Mammary epithelial cell (primary cell): ENCODE measurements at regions of chr20 and their contacts with region 1.

Region 1: GRCh38 chr20:17938871-17939619 is 29.5 kb downstream of the SNX5 start:
- DNase-seq: peak; percentile 29
- H3K4me3 ChIP-seq: no peak overlapping the region
- H3K27ac ChIP-seq: no peak overlapping the region
- H3K4me1 ChIP-seq: no peaks in the 10 kb centered on the region
- H3K27me3 ChIP-seq: no peaks in the 10 kb centered on the region
- CTCF ChIP-seq: peak; percentile 82 to 83

Region 2: GRCh38 chr20:17611540-17612286 is 327.3 kb before region 1 on chr20:
- CTCF ChIA-PET with region 1: no interaction called
- dilution Hi-C with region 1: no loop called
- in situ Hi-C with region 1: no loop called
- intact Hi-C with region 1: loop called (anchors 1 kb)
- DNase-seq: peak; percentile 70
- H3K4me3 ChIP-seq: no peak overlapping the region
- H3K27ac ChIP-seq: no peak overlapping the region
- H3K4me1 ChIP-seq: peaks cover 29% of the 10 kb centered on the region
- H3K27me3 ChIP-seq: no peaks in the 10 kb centered on the region
- CTCF ChIP-seq: peak in 1 of 2 donors; percentile 75

Region 3: GRCh38 chr20:18032977-18033892 is 94.2 kb after region 1 on chr20:
- CTCF ChIA-PET with region 1: no interaction called
- dilution Hi-C with region 1: no loop called
- in situ Hi-C with region 1: no loop called
- intact Hi-C with region 1: no loop called
- DNase-seq: peak; percentile 25
- H3K4me3 ChIP-seq: no peak overlapping the region
- H3K27ac ChIP-seq: no peak overlapping the region
- H3K4me1 ChIP-seq: peaks cover 2% of the 10 kb centered on the region
- H3K27me3 ChIP-seq: no peaks in the 10 kb centered on the region
- CTCF ChIP-seq: no peak